Gastrocnemius medialis (tissue), 4 donors: ENCODE measurements at regions of chrX and their contacts with region 1.

Region 1: DNA sequence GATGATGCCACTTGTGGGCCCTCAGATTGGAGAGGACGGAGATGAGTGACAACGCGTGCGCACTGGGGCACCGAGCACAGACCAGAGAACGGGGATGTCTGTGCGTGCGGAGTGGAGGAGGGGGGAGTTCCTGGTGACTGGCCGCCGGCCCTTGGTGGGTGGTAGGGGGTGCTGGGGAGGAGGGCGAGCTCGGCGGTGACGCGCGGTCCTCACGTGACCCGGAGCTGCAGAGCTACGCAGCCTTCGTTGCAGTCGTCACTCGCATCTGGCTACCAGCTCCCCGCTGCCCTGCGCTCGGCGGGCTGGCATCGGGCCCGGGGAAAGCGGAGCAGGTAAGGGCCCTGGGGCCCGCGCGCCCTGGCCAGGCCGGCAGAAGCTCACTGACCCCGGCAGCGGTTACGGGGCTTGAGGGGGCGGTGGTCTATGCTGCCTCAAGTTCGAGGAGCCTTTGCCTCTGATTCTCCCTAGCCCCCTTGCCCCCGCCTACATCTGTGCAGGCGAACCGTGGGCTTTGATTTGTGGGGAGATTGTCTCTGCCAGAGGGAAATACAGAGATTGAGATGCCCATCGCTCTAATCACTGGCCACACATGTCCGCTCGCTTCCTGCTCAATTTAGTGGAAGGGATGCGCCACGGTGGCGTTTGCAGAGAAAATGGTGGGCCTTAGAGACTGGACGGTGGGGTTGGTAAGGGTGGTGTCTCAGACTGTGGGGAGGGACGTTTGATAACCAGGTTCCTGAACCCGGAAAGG is at the start of gene ARMCX4:
- DNase-seq: peak; percentile 4 to 51
- ATAC-seq: peak; percentile 63 to 78
- H3K4me3 ChIP-seq: peak within 1 kb of the TSS; percentile 46 to 55 (median 50)
- H3K27ac ChIP-seq: peak within 1 kb of the TSS in 3 of 4 donors; percentile 58 to 69 (median 67)
- H3K4me1 ChIP-seq: no peaks in the 10 kb centered on the region
- H3K27me3 ChIP-seq: no peaks in the 10 kb centered on the region
- CTCF ChIP-seq: no peak
- POLR2A ChIP-seq: no peak
- total RNA-seq, gene ARMCX4: 0.44 to 3.0 (median 1.1) TPM

Region 2: DNA sequence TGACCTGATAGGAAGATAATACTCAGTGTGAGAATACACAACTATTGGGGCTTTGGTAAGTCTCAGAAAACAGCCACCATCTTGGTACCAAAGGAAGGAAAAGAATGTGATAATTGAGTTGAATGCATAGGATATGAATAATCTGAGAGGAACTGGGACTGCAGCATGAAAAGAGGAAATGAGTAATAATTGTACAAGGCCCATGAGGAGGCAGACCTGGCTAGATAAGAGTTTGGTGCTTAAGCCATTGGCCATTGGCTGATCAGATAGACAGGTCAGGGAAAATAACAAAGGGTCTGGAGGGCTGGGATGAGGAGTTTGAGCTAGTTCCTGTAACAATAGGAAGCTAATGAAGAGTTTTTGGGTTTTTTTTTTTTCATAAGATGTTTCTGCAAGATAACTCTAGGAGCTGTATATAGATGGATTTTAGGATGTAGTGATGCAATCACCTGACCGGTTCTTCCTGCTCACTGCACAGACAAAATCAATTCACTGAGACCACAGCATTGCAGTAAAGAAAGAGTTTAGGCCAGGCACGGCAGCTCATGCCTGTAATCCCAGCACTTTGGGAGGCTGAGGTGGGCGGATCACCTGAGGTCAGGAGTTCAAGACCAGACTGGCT is 428.2 kb before region 1 on chrX:
- in situ Hi-C with region 1: no loop called
- intact Hi-C with region 1: no loop called
- DNase-seq: no peak
- ATAC-seq: no peak
- H3K4me3 ChIP-seq: no peak overlapping the region
- H3K27ac ChIP-seq: no peak overlapping the region
- H3K4me1 ChIP-seq: no peaks in the 10 kb centered on the region
- H3K27me3 ChIP-seq: no peaks in the 10 kb centered on the region
- CTCF ChIP-seq: no peak
- POLR2A ChIP-seq: no peak

Region 3: GRCh38 chrX:101164766-101165590 is 320.4 kb before region 1 on chrX:
- in situ Hi-C with region 1: no loop called
- intact Hi-C with region 1: no loop called
- DNase-seq: no peak
- ATAC-seq: no peak
- H3K4me3 ChIP-seq: no peak overlapping the region
- H3K27ac ChIP-seq: no peak overlapping the region
- H3K4me1 ChIP-seq: no peaks in the 10 kb centered on the region
- H3K27me3 ChIP-seq: no peaks in the 10 kb centered on the region
- CTCF ChIP-seq: no peak
- POLR2A ChIP-seq: no peak

Region 4: DNA sequence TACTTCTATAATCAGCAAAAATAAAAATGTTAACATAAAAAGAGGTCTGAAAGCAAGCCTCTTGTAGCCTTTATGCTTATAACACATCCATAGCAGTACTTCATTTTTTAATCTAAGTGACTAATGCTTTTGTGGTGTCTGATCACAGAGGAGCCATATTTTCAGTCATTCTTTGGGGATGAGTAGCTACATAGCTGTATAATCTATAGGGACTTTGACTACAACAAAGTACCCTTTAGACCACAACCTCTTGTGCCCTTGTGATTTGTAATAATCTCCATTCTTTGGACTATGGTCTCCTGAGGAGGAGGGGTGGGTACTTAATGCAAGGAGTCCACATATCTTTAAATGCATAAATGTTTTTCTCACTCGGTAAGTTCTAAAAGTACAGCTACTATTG is 256.2 kb before region 1 on chrX:
- in situ Hi-C with region 1: no loop called
- intact Hi-C with region 1: no loop called
- DNase-seq: no peak
- ATAC-seq: no peak
- H3K4me3 ChIP-seq: no peak overlapping the region
- H3K27ac ChIP-seq: no peak overlapping the region
- H3K4me1 ChIP-seq: no peaks in the 10 kb centered on the region
- H3K27me3 ChIP-seq: no peaks in the 10 kb centered on the region
- CTCF ChIP-seq: no peak
- POLR2A ChIP-seq: no peak

Region 5: GRCh38 chrX:101550362-101550750 is 65.0 kb after region 1 on chrX and contains the start of gene ARMCX1:
- in situ Hi-C with region 1: no loop called
- intact Hi-C with region 1: loop called (anchors 5 kb)
- DNase-seq: peak; percentile 43 to 68
- ATAC-seq: peak; percentile 91 to 93
- H3K4me3 ChIP-seq: peak within 1 kb of the TSS; percentile 59 to 79 (median 64)
- H3K27ac ChIP-seq: peak within 1 kb of the TSS; percentile 77 to 87 (median 86)
- H3K4me1 ChIP-seq: no peaks in the 10 kb centered on the region
- H3K27me3 ChIP-seq: no peaks in the 10 kb centered on the region
- CTCF ChIP-seq: no peak
- POLR2A ChIP-seq: peak; percentile 60 to 75
- total RNA-seq, gene ARMCX1: 8.3 to 16.6 (median 12.8) TPM